ENCODE measurements at regions of chr17 and their contacts with region 1.

Region 1: GRCh38 chr17:21551081-21551881 is 141.0 kb upstream of the KCNJ18 start:
- DNase-seq: peak; percentile 50 to 86 (median 75)
- ATAC-seq: peak; percentile 91 to 98 (median 93)
- H3K4me3 ChIP-seq: peak overlapping the region; percentile 67 to 71
- H3K4me3 Mint-ChIP-seq: peak overlapping the region; percentile 80 to 87 (median 84)
- H3K27ac ChIP-seq: no peak overlapping the region
- H3K27ac Mint-ChIP-seq: no peak overlapping the region
- H3K4me1 ChIP-seq: peaks cover 0 to 19% of the 10 kb centered on the region in 2 experiments
- H3K4me1 Mint-ChIP-seq: peaks cover 35 to 37% (median 37%) of the 10 kb centered on the region in 3 donors
- H3K27me3 ChIP-seq: peaks cover 5 to 11% of the 10 kb centered on the region in 2 experiments
- H3K27me3 Mint-ChIP-seq: peaks cover 4 to 12% of the 10 kb centered on the region in 2 donors

Region 2: DNA sequence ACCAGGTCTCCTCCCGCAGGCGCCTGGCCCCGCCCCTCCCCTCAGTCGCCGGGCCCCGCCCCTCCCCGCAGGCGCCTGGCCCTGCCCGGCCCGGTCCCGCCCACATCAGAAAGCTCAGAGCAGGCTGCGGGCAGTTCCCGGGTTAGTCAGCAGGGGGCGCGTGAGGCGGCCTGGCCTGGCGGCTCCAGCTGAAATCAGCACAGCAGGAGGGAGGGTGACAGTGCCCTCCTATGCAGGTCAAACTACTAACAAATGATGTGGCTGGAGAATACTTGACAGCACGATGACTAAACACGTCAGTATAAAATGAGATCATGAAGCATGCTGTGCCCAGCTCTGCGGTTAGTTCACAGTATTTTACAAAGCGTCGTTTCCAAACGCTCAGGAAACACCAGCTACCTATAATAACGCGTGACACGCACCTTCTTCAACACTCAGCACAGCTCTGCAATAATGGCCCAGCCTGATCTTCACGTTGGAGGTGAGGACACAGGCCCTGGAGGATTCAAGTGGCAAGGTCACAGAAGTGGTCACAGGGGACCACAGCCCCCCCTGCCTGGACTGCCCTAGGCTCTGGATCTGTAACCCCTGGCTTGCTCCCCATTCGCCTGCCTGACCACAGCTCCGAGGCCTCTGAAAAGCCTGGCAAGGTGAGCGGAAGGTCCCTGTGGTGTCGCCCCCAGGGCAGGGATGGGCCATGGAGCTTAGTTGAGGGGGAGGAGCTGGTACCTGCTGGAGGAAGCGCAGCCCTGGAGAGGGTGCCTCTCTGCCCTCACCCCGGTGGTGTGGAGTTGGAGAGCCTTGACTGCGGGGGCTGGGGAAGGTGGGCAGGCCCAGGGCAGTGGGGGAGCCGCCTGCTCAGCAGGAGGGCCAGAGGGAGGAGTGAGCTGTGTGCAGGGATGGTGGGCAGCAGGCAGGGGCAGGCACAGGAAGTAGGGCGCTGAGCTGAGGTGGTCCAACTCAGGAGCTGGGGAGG is 93.9 kb before region 1 on chr17:
- CTCF ChIA-PET with region 1: interaction called in 1 of 2 experiments, 10 read pairs
- POLR2A ChIA-PET with region 1: no interaction called
- DNase-seq: peak; percentile 77 to 94 (median 87)
- ATAC-seq: peak; percentile 85 to 91 (median 87)
- H3K4me3 ChIP-seq: no peak overlapping the region
- H3K4me3 Mint-ChIP-seq: no peak overlapping the region
- H3K27ac ChIP-seq: no peak overlapping the region
- H3K27ac Mint-ChIP-seq: peak overlapping the region; percentile 8 to 83
- H3K4me1 ChIP-seq: peaks cover 3 to 17% of the 10 kb centered on the region in 2 experiments
- H3K4me1 Mint-ChIP-seq: peaks cover 14 to 20% (median 20%) of the 10 kb centered on the region in 3 donors
- H3K27me3 ChIP-seq: peaks cover 0 to 42% of the 10 kb centered on the region in 2 experiments
- H3K27me3 Mint-ChIP-seq: peaks cover 5 to 8% of the 10 kb centered on the region in 2 donors

Region 3: DNA sequence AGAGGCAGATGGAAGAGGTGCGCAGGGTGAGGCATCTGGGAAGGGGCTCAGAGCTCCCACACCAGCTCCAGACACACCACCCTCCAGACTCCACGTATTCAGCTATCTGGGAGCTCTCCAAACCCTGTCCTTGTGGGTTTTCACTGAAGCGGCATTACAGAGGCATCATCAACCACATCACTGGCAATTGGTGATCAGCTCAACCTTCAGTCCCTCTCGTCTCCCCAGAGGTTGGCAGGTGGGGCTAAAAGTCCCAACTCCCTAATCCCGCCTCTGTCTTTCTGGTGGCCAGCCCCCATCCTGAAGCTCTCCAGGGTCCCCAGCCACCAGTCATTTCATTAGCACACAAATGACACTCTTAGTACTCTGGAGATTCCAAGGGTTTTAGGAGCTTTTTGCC is 51.2 kb before region 1 on chr17:
- CTCF ChIA-PET with region 1: no interaction called
- POLR2A ChIA-PET with region 1: no interaction called
- DNase-seq: no peak
- ATAC-seq: no peak
- H3K4me3 ChIP-seq: no peak overlapping the region
- H3K4me3 Mint-ChIP-seq: no peak overlapping the region
- H3K27ac ChIP-seq: no peak overlapping the region
- H3K27ac Mint-ChIP-seq: no peak overlapping the region
- H3K4me1 ChIP-seq: no peaks in the 10 kb centered on the region
- H3K4me1 Mint-ChIP-seq: no peaks in the 10 kb centered on the region
- H3K27me3 ChIP-seq: peaks cover 0 to 14% of the 10 kb centered on the region in 2 experiments
- H3K27me3 Mint-ChIP-seq: peaks cover 7 to 9% of the 10 kb centered on the region in 2 donors